Vagina (tissue), 2 donors: ENCODE measurements at regions of chr5 and their contacts with region 1.

Region 1: GRCh38 chr5:74530326-74531050 is 110.0 kb downstream of the ENC1 start:
- DNase-seq: no peak
- H3K4me3 ChIP-seq: no peak overlapping the region
- H3K27ac ChIP-seq: no peak overlapping the region
- H3K4me1 ChIP-seq: no peaks in the 10 kb centered on the region
- H3K27me3 ChIP-seq: no peaks in the 10 kb centered on the region
- CTCF ChIP-seq: no peak
- POLR2A ChIP-seq: no peak

Region 2: DNA sequence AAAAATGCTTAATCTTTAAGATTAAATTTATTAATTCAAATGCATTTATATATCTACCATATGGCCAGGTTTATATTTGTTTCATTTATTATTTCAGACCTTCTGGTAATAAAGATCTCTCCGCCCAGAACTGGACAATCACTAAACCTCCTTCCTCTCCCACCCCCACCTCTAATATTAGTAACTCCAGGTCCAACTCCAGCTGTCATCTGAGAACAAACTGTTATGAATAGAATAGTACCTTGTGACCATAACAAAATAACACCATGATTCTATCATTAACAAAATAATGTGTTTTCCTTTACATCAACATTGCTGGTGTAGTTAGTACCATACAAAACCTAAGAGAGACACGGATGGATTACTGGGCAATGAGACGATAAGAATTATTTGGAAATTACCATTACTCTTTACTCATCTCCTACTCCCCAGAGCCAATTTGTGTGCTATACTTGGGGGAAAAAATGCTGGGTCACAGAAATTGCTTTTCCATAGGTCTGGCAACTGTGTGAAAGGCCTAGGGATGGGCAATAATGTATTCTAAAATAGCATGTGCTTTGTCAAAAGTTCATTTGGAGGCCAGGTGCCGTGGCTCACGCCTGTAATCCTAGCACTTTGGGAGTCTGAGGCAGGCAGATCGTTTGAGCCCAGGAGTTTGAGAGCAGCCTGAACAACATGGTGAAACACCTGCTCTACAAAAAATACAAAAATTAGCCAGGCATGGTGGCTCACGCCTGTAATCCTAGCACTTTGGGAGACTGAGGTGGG is 76.0 kb before region 1 on chr5:
- intact Hi-C with region 1: loop called (anchors 2 kb)
- DNase-seq: no peak
- H3K4me3 ChIP-seq: no peak overlapping the region
- H3K27ac ChIP-seq: no peak overlapping the region
- H3K4me1 ChIP-seq: no peaks in the 10 kb centered on the region
- H3K27me3 ChIP-seq: no peaks in the 10 kb centered on the region
- CTCF ChIP-seq: no peak
- POLR2A ChIP-seq: no peak

Region 3: DNA sequence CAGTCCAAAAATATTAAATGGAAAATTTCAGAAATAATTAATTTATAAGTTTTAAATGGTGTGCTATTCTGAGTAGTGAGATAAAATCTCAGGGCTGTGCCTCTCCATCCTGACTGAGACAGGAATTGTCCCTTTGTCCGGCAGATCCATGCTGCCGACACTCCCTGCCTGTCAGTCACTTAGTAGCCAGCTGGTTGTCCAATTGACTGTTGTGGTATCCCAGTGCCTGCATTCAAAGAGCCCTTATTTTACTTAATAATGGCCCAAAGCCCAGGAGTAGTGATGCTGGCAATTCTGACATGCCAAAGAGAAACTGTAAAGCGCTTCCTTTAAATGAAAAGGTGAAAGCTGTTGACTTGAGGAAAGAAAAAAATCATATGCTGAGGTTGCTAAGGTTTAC is 47.5 kb before region 1 on chr5:
- intact Hi-C with region 1: no loop called
- DNase-seq: no peak
- H3K4me3 ChIP-seq: no peak overlapping the region
- H3K27ac ChIP-seq: no peak overlapping the region
- H3K4me1 ChIP-seq: no peaks in the 10 kb centered on the region
- H3K27me3 ChIP-seq: no peaks in the 10 kb centered on the region
- CTCF ChIP-seq: no peak
- POLR2A ChIP-seq: no peak

Region 4: DNA sequence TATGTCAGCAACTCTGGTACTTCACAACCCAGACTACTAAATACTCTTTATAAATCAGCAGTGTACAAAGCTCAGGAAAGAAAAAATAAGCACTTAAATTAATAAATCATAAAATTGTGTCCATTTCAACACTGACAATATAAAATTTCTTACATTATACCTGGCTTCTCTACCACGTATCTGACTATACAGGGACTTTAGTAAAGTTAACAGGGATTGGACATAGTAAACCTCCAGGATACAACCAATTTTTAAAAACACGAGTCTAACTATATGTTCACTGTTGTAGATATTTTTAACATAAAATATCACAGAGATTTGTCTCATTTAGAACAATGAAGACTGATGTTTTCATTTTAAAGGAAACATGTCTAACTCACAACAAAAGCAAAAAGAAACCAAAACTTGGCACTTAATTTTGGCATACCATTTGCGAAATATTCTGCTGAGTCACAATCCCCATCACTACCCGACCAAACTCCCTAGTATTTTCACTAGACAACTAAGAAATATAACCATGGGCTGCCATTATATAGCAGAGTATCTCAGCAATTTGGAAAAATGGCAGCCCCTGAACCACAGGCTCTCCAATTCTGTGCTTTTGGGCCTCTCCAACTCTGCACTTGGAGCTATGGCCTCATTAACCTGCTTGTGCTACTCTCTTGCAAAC is 321.3 kb after region 1 on chr5:
- intact Hi-C with region 1: no loop called
- DNase-seq: no peak
- H3K4me3 ChIP-seq: peak overlapping the region in 1 of 2 donors; percentile 1
- H3K27ac ChIP-seq: no peak overlapping the region
- H3K4me1 ChIP-seq: no peaks in the 10 kb centered on the region
- H3K27me3 ChIP-seq: no peaks in the 10 kb centered on the region
- CTCF ChIP-seq: no peak
- POLR2A ChIP-seq: no peak

Region 5: DNA sequence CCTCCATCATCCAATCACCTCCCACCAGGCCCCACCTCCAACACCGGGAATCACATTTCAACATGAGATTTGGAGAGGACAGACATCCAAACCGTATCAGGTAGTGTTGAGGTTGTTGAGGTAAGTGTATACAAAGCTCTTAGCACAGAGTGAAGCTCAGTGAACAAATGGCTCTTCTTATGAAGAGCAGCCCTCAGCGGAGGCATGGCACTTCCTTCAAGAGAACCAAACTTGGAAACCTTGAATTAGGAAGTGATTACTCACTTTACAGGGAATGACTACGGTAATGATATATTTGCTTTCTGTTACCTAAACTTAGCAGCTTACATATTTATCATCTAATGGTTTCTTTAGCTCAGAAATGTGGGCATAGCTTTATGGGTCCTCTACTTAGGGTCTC is 1965.4 kb after region 1 on chr5:
- intact Hi-C with region 1: loop called (anchors 5 kb)
- DNase-seq: no peak
- H3K4me3 ChIP-seq: no peak overlapping the region
- H3K27ac ChIP-seq: no peak overlapping the region
- H3K4me1 ChIP-seq: no peaks in the 10 kb centered on the region
- H3K27me3 ChIP-seq: no peaks in the 10 kb centered on the region
- CTCF ChIP-seq: no peak
- POLR2A ChIP-seq: no peak